B cell (primary cell): ENCODE measurements at regions of chr20 and their contacts with region 1.

Region 1: DNA sequence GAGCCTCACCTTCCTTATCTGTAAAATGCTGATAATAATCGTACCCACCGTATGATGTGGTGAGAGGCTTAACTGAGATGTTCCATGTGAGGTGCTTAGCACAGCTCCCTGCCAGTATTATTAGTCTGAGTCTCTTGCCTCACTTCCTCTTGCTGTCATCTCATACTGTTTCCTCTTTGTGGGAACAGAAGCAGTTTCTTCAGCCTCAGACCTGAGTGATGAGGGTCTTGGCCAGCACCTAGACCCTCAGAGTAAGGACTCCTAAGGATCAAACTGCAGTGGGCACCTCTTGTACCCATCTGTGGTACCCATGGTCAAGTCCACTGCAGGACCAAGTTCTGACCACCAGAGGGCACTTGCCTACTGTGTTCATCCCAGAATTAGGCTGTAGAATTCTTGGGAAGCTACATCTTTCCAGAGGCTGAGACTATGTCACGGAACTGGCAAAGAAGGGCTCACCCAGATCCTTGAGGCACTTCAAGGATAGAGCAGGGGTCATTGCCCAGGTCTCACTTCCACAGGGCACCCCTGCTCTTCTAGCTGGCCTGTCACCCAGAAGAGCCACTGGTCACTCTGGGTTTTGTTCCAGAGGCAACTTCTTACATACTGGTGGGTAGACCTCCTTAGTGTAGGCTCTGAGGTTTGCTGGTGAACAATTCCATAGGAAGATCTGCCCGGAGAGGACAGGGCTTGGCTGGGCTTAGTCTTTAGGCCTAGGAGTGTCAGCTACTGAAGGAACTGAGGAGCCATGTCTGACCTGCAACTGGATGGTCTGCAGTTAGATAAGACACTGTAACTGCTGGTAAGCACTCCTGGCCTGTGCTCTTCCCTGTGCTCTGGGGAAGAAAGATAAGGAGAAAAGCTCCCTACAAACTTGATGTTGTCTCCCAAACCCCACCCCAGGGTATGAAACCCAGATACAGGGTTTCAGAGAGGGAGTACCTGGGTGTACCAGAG is 20.6 kb upstream of the SGK2 start:
- DNase-seq: peak; percentile 70
- ATAC-seq: peak; percentile 41
- H3K4me3 ChIP-seq: no peak overlapping the region
- H3K4me3 Mint-ChIP-seq: no peak overlapping the region
- H3K27ac ChIP-seq: no peak overlapping the region
- H3K27ac Mint-ChIP-seq: no peak overlapping the region
- H3K4me1 ChIP-seq: peaks cover 0 to 4% of the 10 kb centered on the region in 2 donors
- H3K4me1 Mint-ChIP-seq: peaks cover 2% of the 10 kb centered on the region
- H3K27me3 ChIP-seq: no peaks in the 10 kb centered on the region
- H3K27me3 Mint-ChIP-seq: no peaks in the 10 kb centered on the region
- CTCF ChIP-seq: peak; percentile 92

Region 2: GRCh38 chr20:43389892-43390626 is 148.1 kb before region 1 on chr20:
- CTCF ChIA-PET with region 1: no interaction called
- POLR2A ChIA-PET with region 1: no interaction called
- intact Hi-C with region 1: no loop called
- DNase-seq: no peak
- ATAC-seq: no peak
- H3K4me3 ChIP-seq: no peak overlapping the region
- H3K4me3 Mint-ChIP-seq: no peak overlapping the region
- H3K27ac ChIP-seq: no peak overlapping the region
- H3K27ac Mint-ChIP-seq: no peak overlapping the region
- H3K4me1 ChIP-seq: no peaks in the 10 kb centered on the region
- H3K4me1 Mint-ChIP-seq: no peaks in the 10 kb centered on the region
- H3K27me3 ChIP-seq: peaks cover 0 to 7% (median 0%) of the 10 kb centered on the region in 4 experiments
- H3K27me3 Mint-ChIP-seq: peaks cover 30% of the 10 kb centered on the region
- CTCF ChIP-seq: no peak

Region 3: GRCh38 chr20:43549416-43550065 is 11.3 kb after region 1 on chr20:
- CTCF ChIA-PET with region 1: interaction called, 26 read pairs
- POLR2A ChIA-PET with region 1: no interaction called
- intact Hi-C with region 1: no loop called
- DNase-seq: no peak
- ATAC-seq: no peak
- H3K4me3 ChIP-seq: no peak overlapping the region
- H3K4me3 Mint-ChIP-seq: no peak overlapping the region
- H3K27ac ChIP-seq: no peak overlapping the region
- H3K27ac Mint-ChIP-seq: no peak overlapping the region
- H3K4me1 ChIP-seq: no peaks in the 10 kb centered on the region
- H3K4me1 Mint-ChIP-seq: no peaks in the 10 kb centered on the region
- H3K27me3 ChIP-seq: no peaks in the 10 kb centered on the region
- H3K27me3 Mint-ChIP-seq: no peaks in the 10 kb centered on the region
- CTCF ChIP-seq: no peak

Region 4: GRCh38 chr20:43558412-43559146 is 20.4 kb after region 1 on chr20 and contains the start of gene SGK2:
- CTCF ChIA-PET with region 1: interaction called, 12 read pairs
- POLR2A ChIA-PET with region 1: no interaction called
- intact Hi-C with region 1: no loop called
- DNase-seq: no peak
- ATAC-seq: no peak
- H3K4me3 ChIP-seq: no peak within 1 kb of the TSS
- H3K4me3 Mint-ChIP-seq: no peak within 1 kb of the TSS
- H3K27ac ChIP-seq: no peak within 1 kb of the TSS
- H3K27ac Mint-ChIP-seq: no peak within 1 kb of the TSS
- H3K4me1 ChIP-seq: no peaks in the 10 kb centered on the region
- H3K4me1 Mint-ChIP-seq: no peaks in the 10 kb centered on the region
- H3K27me3 ChIP-seq: no peaks in the 10 kb centered on the region
- H3K27me3 Mint-ChIP-seq: no peaks in the 10 kb centered on the region
- CTCF ChIP-seq: no peak
- total RNA-seq, gene SGK2: 1.7 and 2.4 TPM in 2 replicates

Region 5: GRCh38 chr20:44080646-44081267 is 542.6 kb after region 1 on chr20:
- CTCF ChIA-PET with region 1: interaction called, 17 read pairs
- POLR2A ChIA-PET with region 1: no interaction called
- intact Hi-C with region 1: no loop called
- DNase-seq: peak; percentile 81
- ATAC-seq: peak; percentile 97
- H3K4me3 ChIP-seq: no peak overlapping the region
- H3K4me3 Mint-ChIP-seq: no peak overlapping the region
- H3K27ac ChIP-seq: no peak overlapping the region
- H3K27ac Mint-ChIP-seq: peak overlapping the region; percentile 26
- H3K4me1 ChIP-seq: no peaks in the 10 kb centered on the region
- H3K4me1 Mint-ChIP-seq: peaks cover 8% of the 10 kb centered on the region
- H3K27me3 ChIP-seq: no peaks in the 10 kb centered on the region
- H3K27me3 Mint-ChIP-seq: no peaks in the 10 kb centered on the region
- CTCF ChIP-seq: peak; percentile 99